Left colon (tissue), 2 donors: ENCODE measurements at regions of chr14 and their contacts with region 1.

Region 1: DNA sequence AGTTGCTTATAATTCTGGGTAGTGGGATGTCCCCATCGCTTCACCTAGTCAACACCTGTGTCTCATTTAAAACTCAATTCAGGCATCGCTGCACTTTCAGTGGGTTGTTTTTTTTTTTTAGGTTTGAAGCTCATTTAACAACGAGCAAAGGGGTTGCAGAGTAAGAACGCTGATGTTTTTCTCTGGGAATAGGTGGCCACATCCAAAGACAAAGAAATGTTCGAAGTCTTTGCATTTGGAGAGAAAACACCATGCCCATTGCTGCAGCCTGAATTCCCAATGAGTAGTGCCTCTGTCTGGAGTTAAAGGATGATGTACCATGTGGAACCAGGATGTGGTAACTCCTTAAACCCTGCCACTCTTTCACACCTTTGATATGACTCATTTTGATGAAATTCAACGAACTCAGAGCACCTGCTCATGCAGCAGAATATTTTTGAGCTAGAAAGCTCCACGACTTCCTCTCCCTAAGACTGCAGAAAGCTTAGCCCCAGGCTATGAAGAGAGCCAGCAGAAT is 35.1 kb upstream of the BATF start:
- DNase-seq: no peak
- ATAC-seq: no peak

Region 2: GRCh38 chr14:74905375-74906142 is 581.7 kb before region 1 on chr14:
- intact Hi-C with region 1: no loop called
- DNase-seq: peak in 1 of 2 donors; percentile 84
- ATAC-seq: peak; percentile 39

Region 3: DNA sequence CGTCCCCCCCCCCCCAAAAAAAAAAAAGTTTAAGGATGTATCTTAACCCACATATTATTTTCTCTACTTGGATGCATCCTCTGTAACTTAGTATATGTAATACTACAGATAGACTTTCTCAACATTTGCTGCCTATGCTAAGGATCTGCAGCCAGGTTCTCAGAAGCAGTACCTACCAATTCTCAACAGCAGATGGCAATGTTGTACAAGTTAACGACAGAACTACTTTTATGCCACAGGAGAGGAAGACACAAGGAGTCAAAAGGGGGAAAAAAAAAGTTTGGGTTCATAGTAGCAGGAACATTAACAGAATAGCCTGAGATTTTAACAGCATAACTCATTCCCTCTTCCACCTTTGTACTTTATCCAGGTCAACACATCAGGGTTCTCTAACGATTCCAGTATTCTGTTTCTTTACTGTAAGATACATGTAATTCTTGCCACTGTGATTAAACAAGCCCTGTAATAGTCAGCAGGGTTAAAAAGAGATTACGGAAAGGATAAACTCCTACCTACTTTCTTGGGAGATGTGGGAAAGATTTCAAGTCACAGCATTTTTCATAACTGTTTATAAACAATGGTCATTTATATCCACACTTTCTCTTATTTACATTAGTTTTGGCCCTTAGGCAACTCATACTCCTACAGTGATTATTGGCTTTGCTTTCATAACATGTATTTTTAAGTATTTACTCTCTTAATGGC is 354.7 kb before region 1 on chr14:
- intact Hi-C with region 1: loop called in 1 of 2 experiments (anchors 10 kb)
- DNase-seq: no peak
- ATAC-seq: peak; percentile 63

Region 4: GRCh38 chr14:75560962-75561432 is 73.8 kb after region 1 on chr14:
- intact Hi-C with region 1: no loop called
- DNase-seq: peak; percentile 67 to 81
- ATAC-seq: peak; percentile 100